Endothelial cell of umbilical vein (primary cell): ENCODE measurements at regions of chr1 and their contacts with region 1.

Region 1: GRCh38 chr1:212749821-212750535 is 41.6 kb downstream of the NSL1 start:
- DNase-seq: peak; percentile 67
- H3K4me3 ChIP-seq: no peak overlapping the region
- H3K27ac ChIP-seq: peak overlapping the region; percentile 13
- H3K4me1 ChIP-seq: no peaks in the 10 kb centered on the region
- H3K27me3 ChIP-seq: no peaks in the 10 kb centered on the region
- CTCF ChIP-seq: peak; percentile 68 to 79
- POLR2A ChIP-seq: no peak

Region 2: GRCh38 chr1:212586206-212587015 is 163.6 kb before region 1 on chr1:
- CTCF ChIA-PET with region 1: no interaction called
- POLR2A ChIA-PET with region 1: no interaction called
- dilution Hi-C with region 1: no loop called
- intact Hi-C with region 1: no loop called
- DNase-seq: no peak
- H3K4me3 ChIP-seq: no peak overlapping the region
- H3K27ac ChIP-seq: no peak overlapping the region
- H3K4me1 ChIP-seq: no peaks in the 10 kb centered on the region
- H3K27me3 ChIP-seq: peaks cover 28 to 50% of the 10 kb centered on the region in 2 experiments
- CTCF ChIP-seq: no peak
- POLR2A ChIP-seq: no peak

Region 3: DNA sequence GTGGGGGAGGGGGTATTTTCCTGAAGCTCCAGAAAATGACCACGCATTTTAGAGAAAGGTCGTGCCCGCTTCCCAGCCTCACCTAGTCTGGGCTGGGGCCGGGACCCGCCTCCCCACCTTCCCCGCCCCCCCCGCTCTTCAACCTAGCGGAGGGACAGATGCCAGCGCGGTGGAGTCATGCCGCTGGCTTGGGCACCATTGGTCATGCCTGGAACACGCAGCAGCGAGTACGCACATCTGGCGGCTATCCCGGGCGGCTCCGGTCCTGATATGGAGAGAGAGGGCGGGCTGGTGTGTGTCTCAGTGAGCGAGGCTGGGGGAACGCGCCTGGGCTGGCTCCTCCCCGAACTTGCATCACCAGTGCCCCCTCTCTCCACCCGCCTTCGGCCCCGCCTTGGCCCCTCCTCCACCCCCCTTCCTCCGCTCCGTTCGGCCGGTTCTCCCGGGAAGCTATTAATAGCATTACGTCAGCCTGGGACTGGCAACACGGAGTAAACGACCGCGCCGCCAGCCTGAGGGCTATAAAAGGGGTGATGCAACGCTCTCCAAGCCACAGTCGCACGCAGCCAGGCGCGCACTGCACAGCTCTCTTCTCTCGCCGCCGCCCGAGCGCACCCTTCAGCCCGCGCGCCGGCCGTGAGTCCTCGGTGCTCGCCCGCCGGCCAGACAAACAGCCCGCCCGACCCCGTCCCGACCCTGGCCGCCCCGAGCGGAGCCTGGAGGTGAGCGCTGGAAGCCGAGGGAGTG is 141.6 kb before region 1 on chr1 and contains the start of gene ATF3:
- CTCF ChIA-PET with region 1: interaction called, 18 read pairs
- POLR2A ChIA-PET with region 1: interaction called, 4 read pairs
- dilution Hi-C with region 1: no loop called
- intact Hi-C with region 1: no loop called
- DNase-seq: peak; percentile 98
- H3K4me3 ChIP-seq: peak within 1 kb of the TSS; percentile 51 to 77 (median 52)
- H3K27ac ChIP-seq: peak within 1 kb of the TSS; percentile 76
- H3K4me1 ChIP-seq: peaks cover 27% of the 10 kb centered on the region
- H3K27me3 ChIP-seq: peaks cover 38 to 44% of the 10 kb centered on the region in 2 experiments
- CTCF ChIP-seq: no peak
- POLR2A ChIP-seq: peak; percentile 98
- total RNA-seq, gene ATF3: 6.1 and 10.7 TPM in 2 replicates

Region 4: DNA sequence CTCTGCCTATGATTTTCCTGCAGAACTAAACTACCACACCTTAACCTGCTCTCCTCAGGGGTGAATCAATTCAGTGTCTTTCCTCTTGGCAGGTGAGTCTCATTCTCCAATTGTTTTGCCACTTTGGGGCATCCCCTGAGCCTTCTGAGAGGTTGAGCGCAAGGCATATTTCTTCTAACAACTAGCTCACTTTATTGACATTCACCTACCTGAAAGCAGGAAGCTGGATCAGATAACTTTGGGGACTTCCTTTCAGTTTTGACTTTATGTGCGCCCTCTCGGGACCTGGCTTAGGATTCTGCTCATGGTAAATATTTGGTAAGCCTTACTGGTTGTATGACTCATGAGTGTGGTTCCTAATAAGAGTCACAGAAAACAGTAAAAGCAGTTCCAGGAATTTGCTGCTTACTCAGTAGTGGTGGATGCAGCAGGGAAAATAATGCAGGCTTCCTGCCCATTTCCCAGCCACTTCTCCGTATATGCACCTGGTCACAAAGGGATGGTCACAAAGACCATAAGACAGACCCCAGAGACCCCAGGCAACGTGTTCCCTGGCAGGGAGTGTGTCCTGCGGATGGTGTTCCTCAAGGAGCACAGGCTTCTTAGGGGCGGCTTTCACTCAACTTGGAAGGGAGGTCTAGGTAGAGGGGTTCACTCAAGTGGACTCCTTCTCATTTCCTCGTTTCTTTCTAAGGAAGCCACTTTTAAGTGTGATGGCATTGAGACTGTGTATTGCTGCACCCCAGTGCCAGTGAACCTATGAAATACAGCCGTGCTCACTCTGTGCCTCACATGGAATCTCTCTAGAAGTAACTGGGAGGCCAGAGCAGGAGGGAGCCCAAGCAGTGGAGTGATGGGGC is 28.4 kb before region 1 on chr1:
- CTCF ChIA-PET with region 1: interaction called, 14 read pairs
- POLR2A ChIA-PET with region 1: no interaction called
- dilution Hi-C with region 1: no loop called
- intact Hi-C with region 1: no loop called
- DNase-seq: peak; percentile 25
- H3K4me3 ChIP-seq: no peak overlapping the region
- H3K27ac ChIP-seq: no peak overlapping the region
- H3K4me1 ChIP-seq: peaks cover 16% of the 10 kb centered on the region
- H3K27me3 ChIP-seq: peaks cover 0 to 2% of the 10 kb centered on the region in 2 experiments
- CTCF ChIP-seq: no peak
- POLR2A ChIP-seq: no peak

Region 5: GRCh38 chr1:212760126-212760823 is 10.3 kb after region 1 on chr1:
- CTCF ChIA-PET with region 1: interaction called, 16 read pairs
- POLR2A ChIA-PET with region 1: no interaction called
- dilution Hi-C with region 1: no loop called
- intact Hi-C with region 1: no loop called
- DNase-seq: no peak
- H3K4me3 ChIP-seq: no peak overlapping the region
- H3K27ac ChIP-seq: no peak overlapping the region
- H3K4me1 ChIP-seq: no peaks in the 10 kb centered on the region
- H3K27me3 ChIP-seq: no peaks in the 10 kb centered on the region
- CTCF ChIP-seq: peak; percentile 39 to 58
- POLR2A ChIP-seq: no peak

Region 6: GRCh38 chr1:212782422-212783154 is 32.6 kb after region 1 on chr1:
- CTCF ChIA-PET with region 1: interaction called, 31 read pairs
- POLR2A ChIA-PET with region 1: no interaction called
- dilution Hi-C with region 1: no loop called
- intact Hi-C with region 1: loop called (anchors 2 kb)
- DNase-seq: peak; percentile 79
- H3K4me3 ChIP-seq: no peak overlapping the region
- H3K27ac ChIP-seq: peak overlapping the region; percentile 15
- H3K4me1 ChIP-seq: peaks cover 15% of the 10 kb centered on the region
- H3K27me3 ChIP-seq: no peaks in the 10 kb centered on the region
- CTCF ChIP-seq: peak; percentile 34 to 38
- POLR2A ChIP-seq: no peak

Region 7: GRCh38 chr1:212857992-212858460 is 108.0 kb after region 1 on chr1 and contains the start of gene FLVCR1:
- CTCF ChIA-PET with region 1: interaction called, 11 read pairs
- POLR2A ChIA-PET with region 1: no interaction called
- dilution Hi-C with region 1: no loop called
- intact Hi-C with region 1: loop called (anchors 1 kb)
- DNase-seq: peak; percentile 94
- H3K4me3 ChIP-seq: peak within 1 kb of the TSS; percentile 10 to 88 (median 51)
- H3K27ac ChIP-seq: peak within 1 kb of the TSS; percentile 24
- H3K4me1 ChIP-seq: peaks cover 19% of the 10 kb centered on the region
- H3K27me3 ChIP-seq: no peaks in the 10 kb centered on the region
- CTCF ChIP-seq: no peak
- POLR2A ChIP-seq: peak; percentile 57
- total RNA-seq, gene FLVCR1: 11.9 and 12.0 TPM in 2 replicates